ENCODE measurements at regions of chr2 and their contacts with region 1.

Region 1: DNA sequence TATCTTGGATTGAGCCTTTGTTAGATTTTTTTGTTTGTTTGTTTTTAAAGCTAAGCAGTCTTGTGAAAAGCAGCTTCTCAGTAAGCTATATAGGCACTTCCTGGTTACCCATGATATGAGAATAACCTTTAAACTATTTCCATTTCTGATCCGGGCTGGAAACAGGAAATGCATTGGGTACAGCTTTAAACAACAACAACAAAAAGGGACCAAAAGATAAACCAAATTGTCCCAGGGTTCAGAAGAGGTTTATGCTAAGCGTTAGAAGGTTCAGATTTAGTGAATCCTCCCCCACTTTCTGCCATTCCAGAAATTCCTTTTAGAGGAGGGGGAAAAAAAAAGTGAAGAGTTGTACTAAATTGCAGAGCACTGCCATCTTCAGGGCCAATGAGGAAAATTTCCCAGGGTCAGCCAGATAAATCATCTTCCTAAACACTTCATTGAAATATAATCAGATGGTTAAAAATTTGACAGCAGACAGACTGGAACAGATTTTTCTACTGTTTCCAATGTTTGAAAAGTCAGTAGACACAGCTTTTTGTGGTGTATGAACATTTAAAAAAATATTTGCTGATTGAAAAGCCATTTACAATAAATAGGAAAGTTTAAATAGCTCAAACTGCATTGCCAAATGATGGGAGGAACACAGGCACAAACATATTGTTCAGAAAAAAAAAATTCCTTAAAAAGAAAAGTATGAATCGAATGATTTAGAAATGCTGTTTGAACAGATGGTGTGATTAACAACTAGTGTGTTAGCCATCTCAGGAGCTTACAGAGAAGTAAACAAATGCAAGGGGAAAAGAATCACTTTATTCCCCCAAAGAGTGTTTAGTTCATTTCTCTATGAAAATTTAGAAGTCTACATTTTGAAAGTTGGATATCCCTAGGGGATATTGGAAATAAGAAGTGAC is 189.9 kb upstream of the TANK start:
- DNase-seq: no peak
- H3K4me3 ChIP-seq: no peak overlapping the region
- H3K27ac ChIP-seq: no peak overlapping the region
- H3K4me1 ChIP-seq: no peaks in the 10 kb centered on the region
- H3K27me3 ChIP-seq: no peaks in the 10 kb centered on the region
- CTCF ChIP-seq: peak; percentile 36 to 83 (median 64)
- POLR2A ChIP-seq: no peak

Region 2: GRCh38 chr2:160241251-160242137 is 728.8 kb before region 1 on chr2:
- intact Hi-C with region 1: loop called (anchors 10 kb)
- DNase-seq: peak; percentile 61
- H3K4me3 ChIP-seq: no peak overlapping the region
- H3K27ac ChIP-seq: peak overlapping the region; percentile 16
- H3K4me1 ChIP-seq: no peaks in the 10 kb centered on the region
- H3K27me3 ChIP-seq: no peaks in the 10 kb centered on the region
- CTCF ChIP-seq: no peak
- POLR2A ChIP-seq: no peak

Region 3: DNA sequence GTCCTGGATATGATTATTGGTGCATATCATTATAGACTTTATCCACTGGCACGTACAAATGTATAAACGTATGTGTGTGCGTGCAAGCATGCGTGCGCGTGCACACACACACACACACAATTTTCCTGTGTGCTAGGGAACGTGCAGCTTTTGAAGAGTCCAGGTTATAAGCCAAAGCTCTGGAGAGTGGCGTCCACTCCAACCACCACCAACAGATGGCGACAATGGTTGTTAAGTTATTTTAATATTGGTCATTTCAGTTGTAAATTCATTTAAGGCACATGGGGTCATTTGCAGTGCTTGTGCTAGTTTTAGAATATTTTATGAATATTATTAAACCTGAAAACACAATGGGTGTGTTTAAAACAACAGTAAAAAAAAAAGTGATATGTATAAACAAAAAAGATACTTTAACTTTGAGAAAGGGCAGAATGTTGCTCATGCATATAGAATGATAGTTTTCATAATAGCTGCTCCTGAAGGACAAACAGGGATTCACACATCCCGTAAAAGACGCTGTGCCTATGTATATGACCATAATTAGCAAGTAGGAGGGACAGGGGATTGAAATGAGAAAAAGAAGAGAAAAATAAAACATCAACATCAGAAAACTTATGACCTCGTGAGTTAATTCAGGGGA is 646.0 kb before region 1 on chr2:
- intact Hi-C with region 1: loop called (anchors 2 kb)
- DNase-seq: peak; percentile 33
- H3K4me3 ChIP-seq: no peak overlapping the region
- H3K27ac ChIP-seq: no peak overlapping the region
- H3K4me1 ChIP-seq: no peaks in the 10 kb centered on the region
- H3K27me3 ChIP-seq: no peaks in the 10 kb centered on the region
- CTCF ChIP-seq: peak; percentile 34 to 63 (median 54)
- POLR2A ChIP-seq: no peak

Region 4: DNA sequence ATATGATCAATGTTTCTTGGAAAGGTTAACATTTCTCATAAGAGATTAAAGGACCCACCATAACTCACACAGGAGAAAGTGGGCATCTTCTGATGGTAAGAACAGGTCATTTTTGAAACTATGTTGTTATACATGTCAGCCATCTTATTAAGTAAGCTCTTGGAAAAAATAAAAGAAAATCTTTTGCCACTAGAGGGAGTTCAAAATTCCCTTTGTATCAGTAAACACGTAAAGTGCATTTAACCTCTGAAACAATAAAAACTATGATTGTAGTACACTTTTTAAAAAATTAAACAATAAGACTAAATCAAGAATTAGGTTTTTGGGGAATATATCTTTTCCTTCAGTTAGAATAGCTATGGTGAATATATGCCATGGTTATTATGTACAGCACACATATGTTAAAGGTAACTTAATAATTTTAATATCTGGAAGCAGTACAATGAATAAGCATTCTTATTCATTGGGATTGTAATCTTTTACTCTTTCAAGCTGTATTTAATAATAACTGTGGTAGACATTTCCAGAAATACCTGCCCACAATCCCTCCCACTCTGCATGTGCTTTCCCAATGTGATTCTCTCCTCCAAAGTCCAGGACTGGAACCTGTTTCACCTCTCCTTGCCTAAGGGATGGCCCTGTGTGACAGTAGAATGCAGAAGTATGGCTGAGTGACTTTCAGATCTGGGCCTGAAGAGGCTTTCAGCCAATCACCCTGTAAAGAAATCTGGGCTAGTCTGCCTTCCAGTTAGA is 540.9 kb before region 1 on chr2:
- intact Hi-C with region 1: loop called (anchors 10 kb)
- DNase-seq: no peak
- H3K4me3 ChIP-seq: no peak overlapping the region
- H3K27ac ChIP-seq: no peak overlapping the region
- H3K4me1 ChIP-seq: no peaks in the 10 kb centered on the region
- H3K27me3 ChIP-seq: no peaks in the 10 kb centered on the region
- CTCF ChIP-seq: peak in 3 of 4 experiments; percentile 52 to 62 (median 55)
- POLR2A ChIP-seq: no peak

Region 5: GRCh38 chr2:160666154-160667060 is 303.9 kb before region 1 on chr2:
- intact Hi-C with region 1: loop called (anchors 10 kb)
- DNase-seq: no peak
- H3K4me3 ChIP-seq: no peak overlapping the region
- H3K27ac ChIP-seq: peak overlapping the region; percentile 40 to 62
- H3K4me1 ChIP-seq: no peaks in the 10 kb centered on the region
- H3K27me3 ChIP-seq: no peaks in the 10 kb centered on the region
- CTCF ChIP-seq: no peak
- POLR2A ChIP-seq: peak; percentile 3

Region 6: DNA sequence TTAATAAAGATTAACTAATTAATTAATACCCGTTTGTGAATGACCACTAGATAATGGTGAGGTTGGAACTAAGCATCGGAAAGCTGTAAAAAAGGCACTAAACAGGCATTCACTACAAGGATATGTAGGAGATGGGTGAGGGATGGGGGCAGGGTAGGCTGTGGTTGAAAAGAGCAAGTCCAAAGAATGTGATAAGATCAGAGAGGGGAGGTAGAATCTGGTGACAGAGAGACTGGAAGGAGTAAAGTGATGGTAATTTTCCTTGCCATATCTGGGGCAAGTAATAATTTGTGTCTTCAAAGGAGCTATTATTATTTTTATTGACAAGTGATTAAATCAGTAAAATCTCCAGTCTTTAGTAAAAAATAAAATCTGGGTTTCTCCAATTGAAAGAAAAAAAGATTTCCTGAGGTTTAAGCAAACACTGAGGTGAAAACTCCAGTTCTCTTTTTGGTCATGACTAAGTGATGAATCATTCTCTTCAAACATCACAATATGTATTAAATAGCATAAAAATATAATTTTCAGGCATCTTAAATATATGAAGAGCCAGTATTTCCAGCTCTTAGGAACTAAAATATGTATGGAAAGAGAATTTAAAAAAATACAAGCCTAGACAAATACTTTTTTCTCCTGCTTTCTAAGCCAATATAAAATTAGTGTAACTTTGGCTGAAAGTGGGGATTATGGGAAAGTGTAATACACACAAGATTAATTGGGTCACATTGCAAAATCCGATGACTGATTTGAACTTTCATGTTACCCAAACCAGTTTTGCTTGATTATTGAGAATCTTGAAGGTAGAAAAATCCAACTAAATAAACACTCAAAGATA is 217.6 kb before region 1 on chr2:
- intact Hi-C with region 1: no loop called
- DNase-seq: no peak
- H3K4me3 ChIP-seq: no peak overlapping the region
- H3K27ac ChIP-seq: no peak overlapping the region
- H3K4me1 ChIP-seq: no peaks in the 10 kb centered on the region
- H3K27me3 ChIP-seq: no peaks in the 10 kb centered on the region
- CTCF ChIP-seq: no peak
- POLR2A ChIP-seq: no peak

Region 7: DNA sequence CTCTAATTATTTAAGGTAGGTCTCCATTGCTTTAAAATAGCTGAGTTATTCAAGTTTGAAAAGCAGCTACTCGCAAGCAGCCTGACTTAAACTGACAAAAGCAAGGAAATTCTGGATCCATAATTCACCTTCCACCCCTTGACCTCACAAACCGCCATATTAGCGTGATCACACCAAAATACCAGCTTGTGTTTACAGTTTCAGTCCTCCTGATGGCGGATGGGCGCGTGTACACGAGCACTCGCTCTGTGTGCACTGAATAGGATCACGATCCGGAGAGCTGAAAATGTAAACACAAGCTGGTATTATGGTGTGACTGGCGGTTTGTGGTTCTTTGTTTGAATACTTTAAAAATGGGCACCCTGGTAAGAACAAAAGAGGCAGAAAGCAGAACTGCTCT is 295.6 kb after region 1 on chr2:
- intact Hi-C with region 1: no loop called
- DNase-seq: no peak
- H3K4me3 ChIP-seq: no peak overlapping the region
- H3K27ac ChIP-seq: no peak overlapping the region
- H3K4me1 ChIP-seq: no peaks in the 10 kb centered on the region
- H3K27me3 ChIP-seq: no peaks in the 10 kb centered on the region
- CTCF ChIP-seq: no peak
- POLR2A ChIP-seq: no peak

Measured in prostate gland (tissue), 2 donors.